Gastrocnemius medialis (tissue), 4 donors: ENCODE measurements at regions of chr5 and their contacts with region 1.

Region 1: GRCh38 chr5:115831163-115831768 is 10.1 kb downstream of the ATG12 start:
- DNase-seq: no peak
- ATAC-seq: no peak
- H3K4me3 ChIP-seq: no peak overlapping the region
- H3K27ac ChIP-seq: no peak overlapping the region
- H3K4me1 ChIP-seq: no peaks in the 10 kb centered on the region
- H3K27me3 ChIP-seq: no peaks in the 10 kb centered on the region
- CTCF ChIP-seq: peak in 4 of 5 experiments; percentile 36 to 69 (median 48)
- POLR2A ChIP-seq: no peak

Region 2: DNA sequence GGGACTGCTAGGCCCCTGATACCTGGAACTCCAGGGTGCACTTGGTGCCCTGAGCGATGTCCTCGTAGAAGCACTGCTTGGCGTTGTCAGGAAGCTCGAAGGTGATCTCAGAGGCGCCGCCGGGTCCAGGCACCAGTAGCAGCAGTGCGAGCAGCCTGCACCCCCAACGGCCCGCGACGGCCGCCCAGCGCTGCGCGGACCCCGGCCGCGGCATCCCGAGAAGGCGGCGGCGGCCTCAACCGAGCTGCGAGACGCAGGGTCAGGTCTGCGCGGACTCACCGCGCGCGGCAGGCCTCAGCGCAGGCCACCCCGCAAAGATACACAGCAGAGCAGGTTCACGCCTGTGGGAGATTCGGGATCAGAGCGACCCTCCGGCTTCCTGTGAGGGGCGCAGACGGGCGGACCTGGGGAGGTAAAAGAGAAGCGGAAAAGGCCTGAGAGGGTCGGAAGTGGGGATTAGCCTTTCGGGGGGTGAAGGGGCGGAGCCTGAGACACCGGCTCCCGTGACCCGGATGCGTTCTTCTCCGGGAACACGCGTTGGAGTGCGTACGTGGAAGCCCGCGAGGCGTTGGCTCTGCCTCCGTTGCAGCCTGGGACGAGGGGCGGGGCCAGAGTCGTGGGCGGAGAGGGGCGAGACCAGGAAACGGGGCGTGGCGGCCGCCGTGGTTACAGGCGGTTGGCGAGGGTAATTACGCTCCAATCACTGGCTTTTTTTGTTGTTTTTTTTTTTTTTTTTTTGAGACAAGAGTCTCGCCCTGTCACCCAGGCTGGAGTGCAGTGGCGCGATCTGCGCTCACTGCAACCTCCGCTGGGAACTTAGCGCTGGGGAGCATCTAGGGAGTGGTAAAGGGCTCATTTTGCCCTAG is 205.5 kb before region 1 on chr5 and contains the start of gene TMED7:
- in situ Hi-C with region 1: loop called in 1 of 4 experiments (anchors 10 kb)
- intact Hi-C with region 1: no loop called
- DNase-seq: peak; percentile 99
- ATAC-seq: peak; percentile 97
- H3K4me3 ChIP-seq: peak within 1 kb of the TSS; percentile 75 to 99 (median 84)
- H3K27ac ChIP-seq: peak within 1 kb of the TSS; percentile 87 to 97 (median 95)
- H3K4me1 ChIP-seq: peaks cover 35% of the 10 kb centered on the region in 2 donors
- H3K27me3 ChIP-seq: no peaks in the 10 kb centered on the region
- CTCF ChIP-seq: peak in 2 of 5 experiments; percentile 12 to 38
- POLR2A ChIP-seq: peak; percentile 83 to 92
- total RNA-seq, gene TMED7: 53.1 to 122 (median 68.6) TPM